IMR-90 (cell line): ENCODE measurements at regions of chr2 and their contacts with region 1.

Region 1: DNA sequence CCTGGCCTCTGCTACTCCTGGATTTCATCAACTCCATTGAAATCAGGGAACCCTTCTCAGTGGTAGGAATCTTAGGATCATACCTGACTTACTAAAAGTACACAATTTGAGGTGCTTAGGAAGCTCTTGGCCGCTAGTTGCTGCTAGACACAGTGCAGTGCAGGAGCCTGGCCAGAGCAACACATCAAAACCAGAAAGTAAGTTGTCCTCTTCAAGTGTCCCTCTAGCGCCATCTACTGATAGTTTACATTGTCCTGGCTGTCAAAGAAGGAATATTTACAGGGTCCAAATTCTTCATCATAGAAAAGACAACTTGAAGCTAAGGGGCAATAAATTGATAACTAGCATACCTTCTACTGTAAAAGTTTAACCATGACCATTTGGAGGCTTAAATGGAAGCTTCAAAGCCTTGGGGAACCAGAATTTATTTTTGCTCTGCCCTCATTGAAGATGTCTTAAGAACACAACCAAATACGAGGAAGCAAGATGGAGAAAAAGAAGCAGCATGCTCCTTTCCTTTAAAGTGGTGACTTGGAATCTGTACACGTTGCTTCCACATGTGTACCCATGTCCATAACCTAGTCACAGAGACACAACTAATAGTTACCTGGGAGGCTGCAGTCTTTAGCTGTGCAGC is 889.1 kb upstream of the GCFC2 start:
- DNase-seq: peak; percentile 67
- ATAC-seq: peak; percentile 49
- H3K4me3 ChIP-seq: no peak overlapping the region
- H3K27ac ChIP-seq: no peak overlapping the region
- H3K4me1 ChIP-seq: no peaks in the 10 kb centered on the region
- H3K27me3 ChIP-seq: no peaks in the 10 kb centered on the region
- CTCF ChIP-seq: peak; percentile 76
- POLR2A ChIP-seq: no peak
- RAD21 ChIP-seq: peak; percentile 67

Region 2: GRCh38 chr2:75729861-75730260 is 870.0 kb before region 1 on chr2:
- CTCF ChIA-PET with region 1: no interaction called
- POLR2A ChIA-PET with region 1: no interaction called
- dilution Hi-C with region 1: no loop called
- in situ Hi-C with region 1: no loop called
- intact Hi-C with region 1: loop called (anchors 5 kb)
- DNase-seq: no peak
- ATAC-seq: no peak; the same call in 1 of the 2 replicates
- H3K4me3 ChIP-seq: no peak overlapping the region
- H3K27ac ChIP-seq: no peak overlapping the region
- H3K4me1 ChIP-seq: no peaks in the 10 kb centered on the region
- H3K27me3 ChIP-seq: peaks cover 10% of the 10 kb centered on the region
- CTCF ChIP-seq: peak; percentile 31
- POLR2A ChIP-seq: no peak
- RAD21 ChIP-seq: peak; percentile 34

Region 3: GRCh38 chr2:75787532-75788132 is 812.2 kb before region 1 on chr2:
- CTCF ChIA-PET with region 1: no interaction called
- POLR2A ChIA-PET with region 1: no interaction called
- dilution Hi-C with region 1: no loop called
- in situ Hi-C with region 1: loop called (anchors 25 kb)
- intact Hi-C with region 1: no loop called
- DNase-seq: peak; percentile 29
- ATAC-seq: peak; percentile 62; the same call in 1 of the 2 replicates
- H3K4me3 ChIP-seq: no peak overlapping the region
- H3K27ac ChIP-seq: no peak overlapping the region
- H3K4me1 ChIP-seq: no peaks in the 10 kb centered on the region
- H3K27me3 ChIP-seq: no peaks in the 10 kb centered on the region
- CTCF ChIP-seq: peak; percentile 56
- POLR2A ChIP-seq: no peak
- RAD21 ChIP-seq: peak; percentile 40

Region 4: GRCh38 chr2:76197842-76198448 is 401.9 kb before region 1 on chr2:
- CTCF ChIA-PET with region 1: interaction called, 11 read pairs
- POLR2A ChIA-PET with region 1: no interaction called
- dilution Hi-C with region 1: no loop called
- in situ Hi-C with region 1: no loop called
- intact Hi-C with region 1: loop called (anchors 10 kb)
- DNase-seq: peak; percentile 65
- ATAC-seq: peak; percentile 53
- H3K4me3 ChIP-seq: no peak overlapping the region
- H3K27ac ChIP-seq: no peak overlapping the region
- H3K4me1 ChIP-seq: no peaks in the 10 kb centered on the region
- H3K27me3 ChIP-seq: no peaks in the 10 kb centered on the region
- CTCF ChIP-seq: peak; percentile 58
- POLR2A ChIP-seq: no peak
- RAD21 ChIP-seq: peak; percentile 32

Region 5: DNA sequence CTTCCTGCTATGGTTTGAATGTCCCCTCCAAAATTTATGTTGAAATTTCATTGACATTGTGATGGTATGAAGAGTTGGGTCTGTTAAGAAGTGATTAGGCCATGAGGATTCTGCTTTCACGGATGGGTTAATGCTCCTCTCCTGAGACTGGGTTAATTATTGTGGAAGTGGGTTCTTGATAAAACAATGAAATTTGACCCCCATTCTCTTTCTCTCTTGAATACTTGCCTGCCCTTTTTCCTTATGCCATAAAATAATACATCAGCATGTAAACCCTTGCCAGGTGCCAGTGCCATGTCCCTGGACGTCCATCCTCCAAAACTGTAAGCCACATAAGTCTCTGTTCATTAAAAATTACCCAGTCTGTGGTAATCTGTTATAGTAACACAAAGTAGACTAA is 569.6 kb after region 1 on chr2:
- CTCF ChIA-PET with region 1: no interaction called
- POLR2A ChIA-PET with region 1: no interaction called
- dilution Hi-C with region 1: no loop called
- in situ Hi-C with region 1: no loop called
- intact Hi-C with region 1: no loop called
- DNase-seq: no peak
- ATAC-seq: no peak
- H3K4me3 ChIP-seq: no peak overlapping the region
- H3K27ac ChIP-seq: no peak overlapping the region
- H3K4me1 ChIP-seq: no peaks in the 10 kb centered on the region
- H3K27me3 ChIP-seq: no peaks in the 10 kb centered on the region
- CTCF ChIP-seq: no peak
- POLR2A ChIP-seq: no peak
- RAD21 ChIP-seq: no peak